ENCODE measurements at regions of chr15 and their contacts with region 1.

Region 1: GRCh38 chr15:98954411-98954810 is 53.2 kb downstream of the PGPEP1L start:
- DNase-seq: peak; percentile 84 to 97
- H3K4me3 ChIP-seq: no peak overlapping the region
- H3K27ac ChIP-seq: peak overlapping the region; percentile 95 to 98
- H3K4me1 ChIP-seq: peaks cover 20 to 48% of the 10 kb centered on the region in 2 donors
- H3K27me3 ChIP-seq: no peaks in the 10 kb centered on the region
- CTCF ChIP-seq: no peak

Region 2: DNA sequence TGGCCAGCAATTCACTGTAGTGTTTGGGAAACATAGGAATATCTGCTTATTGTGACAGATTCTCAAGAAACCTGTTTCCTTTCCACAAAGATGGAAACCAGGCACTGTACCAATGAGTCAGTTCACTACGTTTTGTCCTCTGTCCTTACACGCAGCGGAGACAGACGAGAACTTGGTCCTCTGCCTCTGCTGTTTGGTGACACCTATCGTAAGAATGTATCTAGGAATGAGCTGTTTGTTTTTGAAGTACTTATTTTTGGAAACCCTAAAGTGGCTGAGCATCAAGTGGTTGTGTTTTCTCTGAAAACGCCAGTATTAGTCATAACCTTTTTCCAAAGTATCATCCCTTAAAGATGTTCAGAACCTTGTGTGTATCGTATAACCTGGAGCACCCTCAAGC is 39.8 kb before region 1 on chr15:
- intact Hi-C with region 1: loop called (anchors 2 kb)
- DNase-seq: peak in 1 of 2 donors; percentile 86
- H3K4me3 ChIP-seq: no peak overlapping the region
- H3K27ac ChIP-seq: peak overlapping the region; percentile 78 to 79
- H3K4me1 ChIP-seq: peaks cover 8 to 30% of the 10 kb centered on the region in 2 donors
- H3K27me3 ChIP-seq: no peaks in the 10 kb centered on the region
- CTCF ChIP-seq: no peak

Region 3: GRCh38 chr15:98983333-98983732 is 28.9 kb after region 1 on chr15:
- intact Hi-C with region 1: loop called (anchors 2 kb)
- DNase-seq: peak in 1 of 2 donors; percentile 87
- H3K4me3 ChIP-seq: no peak overlapping the region
- H3K27ac ChIP-seq: peak overlapping the region; percentile 75 to 87
- H3K4me1 ChIP-seq: peaks cover 9 to 23% of the 10 kb centered on the region in 2 donors
- H3K27me3 ChIP-seq: no peaks in the 10 kb centered on the region
- CTCF ChIP-seq: no peak

Region 4: GRCh38 chr15:99014803-99015676 is 60.6 kb after region 1 on chr15:
- intact Hi-C with region 1: loop called (anchors 2 kb)
- DNase-seq: peak in 1 of 2 donors; percentile 78
- H3K4me3 ChIP-seq: peak overlapping the region; percentile 61 to 91
- H3K27ac ChIP-seq: peak overlapping the region; percentile 60 to 63
- H3K4me1 ChIP-seq: no peaks in the 10 kb centered on the region
- H3K27me3 ChIP-seq: no peaks in the 10 kb centered on the region
- CTCF ChIP-seq: no peak

Region 5: DNA sequence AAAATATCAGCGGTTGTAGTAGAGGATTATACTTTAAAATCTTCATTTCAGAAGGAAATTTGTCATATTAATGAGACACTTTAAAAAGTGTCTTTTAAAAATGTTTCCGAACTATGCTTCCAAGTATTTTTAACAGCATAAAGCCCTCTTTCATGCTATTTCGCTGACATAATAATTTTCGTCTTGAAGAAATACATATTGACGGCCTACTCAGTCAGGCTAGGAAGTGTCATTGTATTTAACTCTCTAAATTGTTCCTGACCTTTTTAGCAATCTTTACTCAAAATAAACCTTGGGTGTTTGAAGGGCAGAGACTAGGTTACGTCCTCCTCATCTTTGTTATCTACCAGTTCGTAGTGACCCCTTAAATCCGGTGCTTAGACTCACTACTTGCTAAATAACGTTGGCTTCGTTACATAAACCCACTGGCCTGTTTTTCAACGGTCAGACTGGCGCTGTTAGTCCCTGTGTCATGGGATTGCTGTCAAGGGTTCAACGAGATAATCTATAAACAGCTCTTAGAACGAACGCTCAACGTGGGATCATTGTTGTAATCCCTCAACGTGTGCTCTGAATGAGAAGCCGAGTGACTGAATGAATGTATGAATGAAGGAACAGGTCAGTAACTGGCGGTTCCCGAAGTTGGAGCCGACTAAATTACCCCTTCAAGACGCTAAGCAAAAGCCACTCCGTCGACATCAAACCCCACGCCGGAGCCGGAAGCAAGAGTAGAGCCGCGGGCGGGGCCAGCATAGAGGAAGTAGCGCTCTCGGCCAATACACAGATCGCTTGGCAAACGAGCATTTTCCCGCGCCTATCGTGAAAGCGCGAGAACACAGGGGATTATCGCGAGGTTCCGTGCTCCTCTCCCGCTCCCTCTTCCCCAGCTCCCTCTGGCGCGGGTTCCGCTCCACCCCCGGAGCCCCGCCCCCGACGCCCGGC is 296.4 kb after region 1 on chr15:
- intact Hi-C with region 1: no loop called
- DNase-seq: peak; percentile 92 to 99
- H3K4me3 ChIP-seq: peak overlapping the region; percentile 63 to 89
- H3K27ac ChIP-seq: peak overlapping the region; percentile 89 to 92
- H3K4me1 ChIP-seq: peaks cover 8 to 14% of the 10 kb centered on the region in 2 donors
- H3K27me3 ChIP-seq: no peaks in the 10 kb centered on the region
- CTCF ChIP-seq: no peak

Measured in ascending aorta (tissue), 2 donors.